Adrenal gland (tissue), 19 donors: ENCODE measurements at regions of chr17 and their contacts with region 1.

Region 1: DNA sequence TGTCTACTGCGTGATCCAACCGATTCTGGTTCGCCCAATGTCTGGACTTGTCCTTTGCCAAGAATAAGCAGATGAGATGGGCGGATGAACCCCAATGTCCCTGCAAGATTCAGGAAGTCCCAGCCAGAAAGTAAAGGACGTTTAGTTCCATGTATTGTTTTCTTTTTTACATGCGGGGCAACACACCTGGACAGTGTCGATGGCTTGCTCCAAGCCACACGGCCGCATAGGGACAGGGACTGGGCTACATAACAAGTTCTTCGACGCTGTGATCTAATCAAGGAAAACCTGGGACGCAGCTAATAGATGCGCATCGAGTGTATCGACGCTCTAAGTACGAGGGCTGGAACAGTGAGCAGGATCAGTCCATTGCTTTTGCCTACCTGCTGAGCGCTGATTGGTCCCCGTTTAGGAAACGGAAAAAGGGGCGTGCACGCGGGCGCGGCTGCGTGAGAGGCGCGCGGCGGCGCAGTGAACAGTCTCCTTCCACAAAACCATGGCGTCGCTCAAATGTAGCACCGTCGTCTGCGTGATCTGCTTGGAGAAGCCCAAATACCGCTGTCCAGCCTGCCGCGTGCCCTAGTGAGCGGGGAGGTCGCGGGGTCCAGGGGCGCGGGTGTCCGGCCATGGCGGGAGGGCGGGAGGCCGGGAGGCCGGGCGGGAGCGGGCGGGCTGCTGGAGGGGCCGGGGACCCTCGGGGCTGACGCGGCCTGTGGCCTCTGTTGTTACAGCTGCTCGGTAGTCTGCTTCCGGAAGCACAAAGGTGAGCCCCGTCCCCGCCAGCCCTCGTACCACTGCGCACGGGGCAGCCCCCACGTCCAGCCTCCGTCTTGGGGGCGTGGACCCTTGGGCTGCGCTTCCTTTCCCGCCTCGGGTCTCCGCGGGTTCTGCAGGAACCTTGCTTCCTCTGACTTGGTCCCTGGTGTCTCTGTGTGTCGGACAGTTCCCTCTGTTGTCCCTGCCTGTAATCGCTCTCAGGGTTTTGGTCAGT is at the start of gene ZNHIT3:
- DNase-seq: peak; percentile 90 to 97 (median 93)
- H3K4me3 ChIP-seq: peak within 1 kb of the TSS; percentile 27 to 92 (median 60)
- H3K27ac ChIP-seq: peak within 1 kb of the TSS in 4 of 5 donors; percentile 70 to 92 (median 84)
- H3K4me1 ChIP-seq: peaks cover 12 to 29% of the 10 kb centered on the region in 2 donors
- H3K27me3 ChIP-seq: no peaks in the 10 kb centered on the region
- CTCF ChIP-seq: no peak
- POLR2A ChIP-seq: peak in 1 of 2 donors; percentile 83
- total RNA-seq, gene ZNHIT3: 13.6 to 65.6 (median 37.9) TPM

Region 2: GRCh38 chr17:35969558-35970380 is 516.7 kb before region 1 on chr17:
- intact Hi-C with region 1: loop called in 1 of 2 experiments (anchors 10 kb)
- DNase-seq: peak; percentile 71 to 94 (median 85)
- H3K4me3 ChIP-seq: no peak overlapping the region
- H3K27ac ChIP-seq: no peak overlapping the region
- H3K4me1 ChIP-seq: peaks cover 0 to 16% of the 10 kb centered on the region in 2 donors
- H3K27me3 ChIP-seq: no peaks in the 10 kb centered on the region
- CTCF ChIP-seq: peak; percentile 83 to 90 (median 86)
- POLR2A ChIP-seq: no peak